RWPE1 (cell line): ENCODE measurements at regions of chr16 and their contacts with region 1.

Region 1: GRCh38 chr16:84489131-84489530 is 15.3 kb downstream of the MEAK7 start:
- DNase-seq: no peak
- H3K27ac ChIP-seq: no peak overlapping the region
- CTCF ChIP-seq: no peak

Region 2: DNA sequence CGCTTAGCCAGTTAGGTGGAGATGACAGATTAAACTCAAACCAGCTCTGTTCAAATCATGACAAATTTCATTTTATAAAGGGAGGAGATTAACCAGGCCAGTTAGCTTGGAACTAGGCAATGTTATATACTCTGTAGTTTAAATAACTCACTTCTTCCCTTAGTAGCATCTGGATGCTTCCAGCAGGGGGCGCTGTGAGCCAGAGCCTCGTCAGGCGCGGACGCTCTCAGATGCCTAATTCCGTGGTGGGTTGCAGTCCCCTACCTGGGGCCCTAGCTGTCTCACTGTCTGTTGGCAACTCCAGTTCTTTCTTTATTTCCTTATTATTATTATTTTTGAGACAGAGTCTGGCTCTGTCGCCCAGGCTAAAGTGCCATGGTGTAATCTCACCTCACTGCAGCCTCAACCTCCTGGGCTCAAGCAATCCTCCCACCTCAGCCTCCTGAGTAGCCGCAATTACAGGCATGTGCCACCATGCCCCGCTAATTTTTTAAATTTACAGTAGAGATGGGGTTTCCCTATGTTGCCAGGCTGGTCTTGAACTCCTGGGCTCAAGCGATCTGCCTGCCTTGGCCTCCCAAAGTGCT is 211.8 kb before region 1 on chr16:
- CTCF ChIA-PET with region 1: interaction called, 13 read pairs
- POLR2A ChIA-PET with region 1: no interaction called
- DNase-seq: peak; percentile 44
- H3K27ac ChIP-seq: no peak overlapping the region
- CTCF ChIP-seq: peak; percentile 75

Region 3: GRCh38 chr16:84532291-84532724 is 43.2 kb after region 1 on chr16:
- CTCF ChIA-PET with region 1: no interaction called
- POLR2A ChIA-PET with region 1: no interaction called
- DNase-seq: peak; percentile 86
- H3K27ac ChIP-seq: peak overlapping the region; percentile 73
- CTCF ChIP-seq: no peak

Region 4: DNA sequence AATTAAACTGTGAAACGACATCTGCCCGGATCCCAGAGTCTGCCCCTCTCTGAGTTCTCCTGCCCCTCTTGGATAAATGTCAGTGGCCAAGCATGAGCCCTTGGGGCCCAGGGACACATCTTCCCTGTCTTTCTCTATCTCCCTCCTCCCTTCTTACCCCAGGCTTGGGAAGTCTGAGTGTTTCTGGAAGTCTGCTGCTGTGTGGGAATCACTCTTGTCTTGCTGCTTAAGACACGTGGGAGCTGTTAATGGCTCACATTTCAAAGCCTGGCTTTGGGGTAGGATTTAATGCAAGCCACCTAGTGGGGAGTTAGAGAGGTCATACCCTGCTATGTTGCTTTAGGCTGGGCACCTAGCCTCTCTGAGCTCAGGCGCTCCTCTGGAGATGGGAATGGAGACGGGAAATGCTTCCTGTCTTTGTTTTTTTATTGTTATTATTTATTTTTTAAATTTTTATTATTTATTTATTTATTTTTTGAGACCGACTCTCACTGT is 841.6 kb after region 1 on chr16:
- CTCF ChIA-PET with region 1: no interaction called
- POLR2A ChIA-PET with region 1: no interaction called
- DNase-seq: peak; percentile 61
- H3K27ac ChIP-seq: 0 out of 2 replicates have a peak overlapping the region, but pooled peaks have one; percentile 17
- CTCF ChIP-seq: peak; percentile 45